Natural killer cell (primary cell): ENCODE measurements at regions of chr4 and their contacts with region 1.

Region 1: GRCh38 chr4:51831133-51831532 is 11.8 kb upstream of the DCUN1D4 start:
- DNase-seq: peak; percentile 46 to 76
- ATAC-seq: peak; percentile 52 to 72 (median 63)
- H3K4me3 ChIP-seq: no peak overlapping the region
- H3K4me3 Mint-ChIP-seq: no peak overlapping the region
- H3K27ac ChIP-seq: no peak overlapping the region
- H3K27ac Mint-ChIP-seq: no peak overlapping the region
- H3K4me1 ChIP-seq: no peaks in the 10 kb centered on the region
- H3K4me1 Mint-ChIP-seq: peaks cover 0 to 6% of the 10 kb centered on the region in 2 donors
- H3K27me3 ChIP-seq: no peaks in the 10 kb centered on the region
- H3K27me3 Mint-ChIP-seq: peaks cover 19 to 27% of the 10 kb centered on the region in 2 donors
- CTCF ChIP-seq: peak; percentile 43

Region 2: GRCh38 chr4:51820443-51821234 is 10.5 kb before region 1 on chr4:
- intact Hi-C with region 1: no loop called
- DNase-seq: no peak
- ATAC-seq: peak in 2 of 3 donors; percentile 42 to 57
- H3K4me3 ChIP-seq: no peak overlapping the region
- H3K4me3 Mint-ChIP-seq: no peak overlapping the region
- H3K27ac ChIP-seq: no peak overlapping the region
- H3K27ac Mint-ChIP-seq: no peak overlapping the region
- H3K4me1 ChIP-seq: no peaks in the 10 kb centered on the region
- H3K4me1 Mint-ChIP-seq: peaks cover 4 to 8% of the 10 kb centered on the region in 2 donors
- H3K27me3 ChIP-seq: no peaks in the 10 kb centered on the region
- H3K27me3 Mint-ChIP-seq: peaks cover 0 to 5% of the 10 kb centered on the region in 2 donors
- CTCF ChIP-seq: no peak

Region 3: DNA sequence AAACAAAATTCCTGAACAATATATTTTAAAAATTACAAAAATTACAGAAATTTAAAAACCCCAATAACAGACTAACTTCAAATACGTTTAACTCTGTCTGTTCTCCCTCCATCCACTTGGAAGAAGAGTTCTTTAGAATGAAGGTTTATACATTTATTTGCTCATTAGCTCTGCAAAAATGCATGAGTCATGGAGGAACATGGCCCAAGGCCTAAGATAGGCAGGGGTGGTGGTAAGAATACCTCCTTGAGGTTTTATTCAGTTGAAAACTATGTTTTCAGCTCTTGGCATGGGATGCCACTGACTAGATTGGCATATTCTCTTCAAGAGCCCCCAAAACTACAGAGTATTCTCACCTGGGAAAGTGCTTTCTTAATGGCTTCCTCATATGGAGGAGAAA is 197.8 kb after region 1 on chr4:
- intact Hi-C with region 1: loop called (anchors 1 kb)
- DNase-seq: no peak
- ATAC-seq: no peak
- H3K4me3 ChIP-seq: no peak overlapping the region
- H3K4me3 Mint-ChIP-seq: no peak overlapping the region
- H3K27ac ChIP-seq: no peak overlapping the region
- H3K27ac Mint-ChIP-seq: no peak overlapping the region
- H3K4me1 ChIP-seq: no peaks in the 10 kb centered on the region
- H3K4me1 Mint-ChIP-seq: no peaks in the 10 kb centered on the region
- H3K27me3 ChIP-seq: no peaks in the 10 kb centered on the region
- H3K27me3 Mint-ChIP-seq: no peaks in the 10 kb centered on the region
- CTCF ChIP-seq: no peak

Region 4: GRCh38 chr4:52049266-52049665 is 218.1 kb after region 1 on chr4:
- intact Hi-C with region 1: no loop called
- DNase-seq: no peak
- ATAC-seq: no peak
- H3K4me3 ChIP-seq: no peak overlapping the region
- H3K4me3 Mint-ChIP-seq: no peak overlapping the region
- H3K27ac ChIP-seq: no peak overlapping the region
- H3K27ac Mint-ChIP-seq: no peak overlapping the region
- H3K4me1 ChIP-seq: peaks cover 7% of the 10 kb centered on the region
- H3K4me1 Mint-ChIP-seq: no peaks in the 10 kb centered on the region
- H3K27me3 ChIP-seq: peaks cover 19% of the 10 kb centered on the region
- H3K27me3 Mint-ChIP-seq: peaks cover 33 to 44% of the 10 kb centered on the region in 2 donors
- CTCF ChIP-seq: no peak